SK-N-SH (cell line): ENCODE measurements at regions of chr6 and their contacts with region 1.

Region 1: GRCh38 chr6:126361832-126362412 is 22.0 kb downstream of the CENPW start:
- DNase-seq: no peak
- H3K4me3 ChIP-seq: no peak overlapping the region
- H3K27ac ChIP-seq: no peak overlapping the region
- H3K4me1 ChIP-seq: no peaks in the 10 kb centered on the region; a peak in 1 of 4 replicates
- H3K27me3 ChIP-seq: no peaks in the 10 kb centered on the region
- CTCF ChIP-seq: no peak
- EP300 ChIP-seq: no peak
- RAD21 ChIP-seq: no peak

Region 2: DNA sequence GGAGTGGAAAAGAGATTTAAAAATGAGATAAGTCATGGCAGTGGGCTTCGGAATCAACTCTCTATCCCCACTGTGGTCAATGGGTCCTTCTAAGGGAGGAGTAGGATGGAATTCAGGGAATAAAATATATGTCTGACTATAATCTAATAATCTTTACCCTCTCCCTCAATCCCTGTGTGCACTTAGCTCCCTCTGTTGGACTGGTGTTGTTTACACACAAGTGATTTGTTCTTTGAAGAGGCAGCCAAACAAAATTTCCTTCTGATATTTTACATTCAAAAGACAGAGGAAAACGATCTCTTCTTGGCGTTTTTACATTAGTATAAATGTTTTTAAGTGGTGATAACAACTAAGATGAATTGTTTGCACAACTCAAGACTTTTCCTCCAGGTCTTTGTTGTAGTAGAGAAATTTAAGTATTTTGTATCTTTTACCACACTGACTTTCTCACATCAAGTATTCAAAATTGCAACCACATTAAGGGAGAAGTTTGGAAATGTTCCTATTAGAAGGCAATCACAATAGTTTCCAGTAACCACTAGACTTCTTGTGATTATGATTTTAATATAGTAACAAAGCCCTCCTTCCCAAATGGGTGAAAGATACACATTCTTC is 295.7 kb after region 1 on chr6:
- CTCF ChIA-PET with region 1: interaction called, 18 read pairs
- POLR2A ChIA-PET with region 1: no interaction called
- DNase-seq: peak; percentile 7
- H3K4me3 ChIP-seq: no peak overlapping the region; a peak in 1 of 4 replicates
- H3K27ac ChIP-seq: no peak overlapping the region
- H3K4me1 ChIP-seq: 0 out of 4 replicates have a peak, but pooled peaks cover 0 to 4% of the 10 kb centered on the region in 2 experiments
- H3K27me3 ChIP-seq: no peaks in the 10 kb centered on the region
- CTCF ChIP-seq: peak; percentile 48
- EP300 ChIP-seq: no peak
- RAD21 ChIP-seq: peak; percentile 70